Head of caudate nucleus (tissue), 42 donors: ENCODE measurements at regions of chr3 and their contacts with region 1.

Region 1: DNA sequence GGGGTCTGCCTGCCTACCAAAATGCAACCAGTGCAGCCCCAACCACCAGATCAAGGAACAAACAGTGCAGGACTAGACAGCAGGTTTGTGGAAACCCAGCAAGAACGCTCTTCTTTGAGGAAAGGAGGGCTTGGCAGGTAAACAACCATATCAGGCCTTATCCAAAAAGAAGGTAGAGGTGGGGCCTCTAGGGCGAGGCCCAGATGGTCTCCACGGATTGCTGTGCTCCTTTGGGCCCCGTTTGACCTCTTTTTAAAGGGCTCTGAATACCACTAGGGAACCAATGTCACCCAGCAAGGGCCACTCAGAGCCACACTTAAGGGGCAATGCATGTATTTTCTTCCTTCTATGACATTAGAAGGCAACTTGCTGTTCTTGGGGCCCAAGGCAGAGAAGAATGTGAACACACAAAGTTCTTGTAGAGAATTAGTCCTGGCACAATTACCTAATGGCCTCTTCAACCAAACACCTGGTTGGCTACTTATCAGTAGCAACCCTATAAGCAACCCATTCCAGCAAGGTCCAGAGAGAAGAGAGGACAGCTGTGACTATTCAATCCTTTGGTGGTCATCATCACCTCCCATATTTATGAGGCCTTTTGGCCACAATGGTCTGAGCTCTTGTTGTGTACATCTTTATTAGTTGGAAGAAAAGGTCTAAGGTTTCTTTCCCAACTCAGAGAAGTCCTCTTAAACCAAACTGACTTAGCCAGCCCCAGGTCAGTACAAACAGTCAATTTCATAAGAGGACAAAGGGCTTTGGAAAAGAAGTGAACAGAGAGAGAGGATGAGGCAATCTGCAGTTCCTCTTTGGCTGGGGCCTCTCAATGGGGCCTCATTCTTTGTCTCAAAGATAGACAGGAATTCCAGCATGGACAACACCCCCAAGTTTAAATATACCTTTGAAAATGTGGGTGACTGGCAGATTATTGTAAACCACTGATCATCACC is 36.0 kb downstream of the FOXP1 start:
- DNase-seq: no peak

Region 2: DNA sequence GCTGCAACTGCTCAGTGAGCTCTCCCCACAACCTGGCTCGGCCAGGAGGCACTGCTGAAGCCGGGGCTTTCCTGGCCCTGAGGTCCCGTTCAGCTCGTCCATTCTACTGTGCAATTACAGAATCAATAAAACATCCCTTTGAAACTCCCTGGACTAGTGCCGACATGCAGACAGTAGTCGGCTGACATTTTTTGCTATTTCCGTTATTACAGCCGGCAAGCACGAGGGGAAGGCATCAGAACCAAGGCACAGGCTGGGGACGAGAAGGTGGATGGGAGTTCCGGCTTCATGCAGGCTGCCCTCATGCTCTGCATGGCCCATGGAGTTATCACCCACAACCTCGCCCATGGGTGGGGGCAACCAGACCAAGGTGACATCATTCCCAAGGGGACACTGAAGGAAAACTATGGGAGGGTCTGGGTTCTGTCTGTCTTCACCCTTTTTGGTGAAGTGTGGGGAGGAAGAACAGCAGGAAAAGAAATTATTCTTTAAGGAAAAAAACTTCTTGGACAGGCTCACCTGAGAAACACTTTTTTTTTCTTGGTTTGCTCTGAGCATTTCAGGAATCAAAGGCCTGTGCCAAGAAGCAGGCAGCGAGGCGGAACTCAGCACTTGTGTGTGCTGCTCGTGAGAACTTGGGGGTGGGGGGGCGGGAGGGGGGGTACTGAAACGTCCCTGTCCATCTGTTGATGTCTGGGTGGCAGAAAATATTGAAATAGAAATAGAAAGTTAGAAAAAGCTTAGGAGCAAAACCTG is 118.5 kb before region 1 on chr3:
- intact Hi-C with region 1: no loop called
- DNase-seq: no peak

Region 3: GRCh38 chr3:71563827-71564226 is 16.3 kb after region 1 on chr3:
- intact Hi-C with region 1: loop called (anchors 2 kb)
- DNase-seq: no peak

Region 4: GRCh38 chr3:71681224-71681668 is 133.7 kb after region 1 on chr3:
- intact Hi-C with region 1: no loop called
- DNase-seq: peak; percentile 43 to 85 (median 71)

Region 5: GRCh38 chr3:72960812-72961518 is 1413.4 kb after region 1 on chr3:
- intact Hi-C with region 1: no loop called
- DNase-seq: peak in 23 of 42 donors; percentile 14 to 78 (median 32)